Esophagus squamous epithelium (tissue), 5 donors: ENCODE measurements at regions of chr15 and their contacts with region 1.

Region 1: DNA sequence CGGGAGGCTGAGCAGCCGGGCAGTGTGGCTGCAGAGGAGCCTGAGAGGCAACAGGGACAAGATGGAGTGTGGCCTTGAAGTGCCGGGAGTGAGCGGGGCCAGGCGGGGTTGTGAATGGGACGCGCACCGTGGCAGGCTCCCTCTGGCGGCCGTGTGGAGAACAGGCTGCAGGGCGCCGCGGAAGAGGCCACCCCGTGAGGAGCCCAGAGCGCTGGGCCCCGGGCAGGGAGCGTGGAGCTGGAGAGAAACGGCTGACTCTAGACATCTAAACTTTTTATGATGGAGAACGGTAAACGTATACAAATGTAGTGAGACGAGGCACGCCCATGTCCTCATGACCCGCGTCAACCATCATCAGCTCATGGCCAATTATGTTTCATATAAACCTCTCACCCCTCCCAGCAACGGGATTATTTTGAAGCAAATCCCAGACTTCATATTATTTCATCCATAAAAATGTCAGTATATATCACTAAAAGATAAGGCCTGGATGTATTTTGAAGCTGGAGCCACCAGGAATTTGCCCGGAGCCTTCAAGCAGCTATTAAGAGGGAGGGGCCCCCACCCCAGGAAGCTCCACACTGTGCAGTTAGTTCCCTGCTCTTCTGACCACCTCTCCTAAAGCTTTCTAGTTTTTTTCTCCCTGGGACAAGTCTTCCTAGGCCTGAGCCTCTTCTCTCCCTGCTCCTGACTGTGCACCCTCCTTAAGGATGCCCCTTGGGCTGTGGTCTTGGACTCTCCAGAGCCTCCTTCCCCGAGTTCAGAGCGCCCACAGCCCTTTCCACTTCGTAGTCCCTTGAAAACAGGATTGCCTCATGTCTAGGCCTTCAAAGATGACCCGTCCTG is 149.4 kb downstream of the SMAD6 start:
- DNase-seq: no peak
- H3K4me3 ChIP-seq: peak overlapping the region in 1 of 4 donors; percentile 7
- H3K27ac ChIP-seq: peak overlapping the region in 3 of 4 donors; percentile 18 to 66 (median 48)
- H3K4me1 ChIP-seq: peaks cover 10 to 16% (median 15%) of the 10 kb centered on the region in 3 donors
- H3K27me3 ChIP-seq: peaks cover 0 to 19% (median 0%) of the 10 kb centered on the region in 4 donors
- CTCF ChIP-seq: peak; percentile 95 to 97 (median 96)
- POLR2A ChIP-seq: no peak

Region 2: DNA sequence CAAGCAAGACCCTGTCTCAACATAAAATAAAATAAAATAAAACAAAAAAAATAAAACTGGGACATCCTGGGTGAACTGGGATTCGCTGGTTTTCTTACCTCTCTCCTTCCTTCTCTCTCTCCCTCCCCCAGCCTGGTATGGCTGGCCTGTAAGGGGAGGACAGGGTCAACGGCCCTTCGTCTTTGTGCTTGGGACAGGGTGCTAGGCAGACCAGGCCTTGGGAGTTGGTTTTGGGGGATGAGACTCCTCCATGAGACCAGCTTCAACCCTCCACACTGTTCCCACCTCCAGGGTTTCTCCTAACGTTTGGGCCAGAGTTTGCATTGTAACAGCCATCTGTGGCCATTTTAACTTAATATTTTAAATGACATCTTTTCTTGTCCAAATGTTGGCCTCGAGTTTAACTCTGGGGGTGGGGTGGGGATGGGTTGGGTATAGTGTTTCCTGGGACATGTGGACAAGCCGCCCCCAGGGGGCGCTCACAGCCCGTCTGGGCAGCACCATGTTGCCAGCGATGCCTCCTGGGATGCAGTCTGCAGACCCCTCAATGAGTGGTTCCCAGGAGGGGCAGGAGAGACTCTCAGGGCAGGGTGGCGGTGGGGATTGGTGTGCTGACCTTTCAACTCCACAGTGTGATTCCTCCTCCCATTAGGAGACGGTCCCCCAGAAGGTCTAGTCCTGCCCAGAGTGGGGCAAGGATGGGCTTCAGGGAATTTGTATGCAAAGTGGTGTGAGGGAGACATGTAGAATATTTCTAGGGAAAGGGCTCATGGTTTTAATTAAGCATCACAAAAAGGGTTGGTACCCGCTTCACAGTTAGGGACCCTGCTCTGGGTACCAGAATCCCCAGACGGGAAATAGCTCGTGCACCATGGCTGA is 247.9 kb before region 1 on chr15:
- intact Hi-C with region 1: loop called (anchors 5 kb)
- DNase-seq: no peak
- H3K4me3 ChIP-seq: no peak overlapping the region
- H3K27ac ChIP-seq: no peak overlapping the region
- H3K4me1 ChIP-seq: peaks cover 0 to 5% (median 0%) of the 10 kb centered on the region in 3 donors
- H3K27me3 ChIP-seq: peaks cover 0 to 15% (median 0%) of the 10 kb centered on the region in 4 donors
- CTCF ChIP-seq: peak; percentile 54 to 77 (median 72)
- POLR2A ChIP-seq: no peak

Region 3: DNA sequence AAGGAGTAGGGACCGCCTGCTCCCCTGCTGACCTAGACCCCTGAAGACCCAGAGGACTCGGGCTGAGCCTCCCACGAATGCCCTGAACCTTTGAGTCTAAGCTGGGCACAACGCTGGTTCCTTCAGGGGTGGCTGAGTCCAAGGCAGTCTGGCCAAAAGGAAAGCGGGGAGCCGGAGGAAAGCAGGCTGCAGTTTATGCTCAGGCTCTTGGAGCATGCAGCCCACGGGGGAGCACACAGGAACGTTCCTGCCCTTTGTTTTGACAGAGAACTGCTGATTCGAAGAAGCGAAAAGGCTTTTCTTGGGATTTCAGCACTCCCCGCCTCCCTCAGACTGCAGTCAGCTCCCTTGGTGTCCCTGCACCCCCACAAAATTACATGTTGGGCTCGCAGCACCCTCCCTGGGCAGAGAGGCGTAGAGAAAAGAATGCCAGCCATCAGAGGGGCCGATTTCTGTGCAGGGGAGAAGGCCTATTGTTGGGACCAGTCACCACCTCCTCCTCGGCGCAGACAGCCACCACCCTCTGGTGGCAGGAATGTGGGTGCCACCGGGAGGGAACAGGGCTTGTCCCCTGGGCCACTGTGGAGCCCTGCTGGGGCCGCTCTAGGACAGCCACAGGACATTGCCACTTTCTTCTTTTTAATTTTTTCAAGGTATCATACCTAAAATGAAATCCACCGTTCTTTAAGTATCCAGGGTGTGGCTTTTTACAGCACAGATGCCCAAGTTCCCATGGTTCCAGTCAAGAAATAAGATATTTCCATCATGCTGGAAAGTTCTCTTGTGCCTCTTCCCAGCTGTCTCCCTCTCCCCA is 77.2 kb before region 1 on chr15:
- intact Hi-C with region 1: loop called (anchors 5 kb)
- DNase-seq: no peak
- H3K4me3 ChIP-seq: no peak overlapping the region
- H3K27ac ChIP-seq: peak overlapping the region; percentile 1 to 66 (median 56)
- H3K4me1 ChIP-seq: peaks cover 0 to 34% (median 17%) of the 10 kb centered on the region in 3 donors
- H3K27me3 ChIP-seq: no peaks in the 10 kb centered on the region
- CTCF ChIP-seq: peak; percentile 77 to 97 (median 96)
- POLR2A ChIP-seq: no peak

Region 4: GRCh38 chr15:66966257-66966656 is 114.8 kb after region 1 on chr15:
- intact Hi-C with region 1: no loop called
- DNase-seq: no peak
- H3K4me3 ChIP-seq: no peak overlapping the region
- H3K27ac ChIP-seq: no peak overlapping the region
- H3K4me1 ChIP-seq: peaks cover 0 to 9% (median 0%) of the 10 kb centered on the region in 3 donors
- H3K27me3 ChIP-seq: no peaks in the 10 kb centered on the region
- CTCF ChIP-seq: peak in 3 of 6 experiments; percentile 17 to 46 (median 33)
- POLR2A ChIP-seq: no peak